Activated naive CD4-positive, alpha-beta T cell treated with anti-CD3 and anti-CD28 coated beads for 36 hours (primary cell): ENCODE measurements at regions of chr11 and their contacts with region 1.

Region 1: DNA sequence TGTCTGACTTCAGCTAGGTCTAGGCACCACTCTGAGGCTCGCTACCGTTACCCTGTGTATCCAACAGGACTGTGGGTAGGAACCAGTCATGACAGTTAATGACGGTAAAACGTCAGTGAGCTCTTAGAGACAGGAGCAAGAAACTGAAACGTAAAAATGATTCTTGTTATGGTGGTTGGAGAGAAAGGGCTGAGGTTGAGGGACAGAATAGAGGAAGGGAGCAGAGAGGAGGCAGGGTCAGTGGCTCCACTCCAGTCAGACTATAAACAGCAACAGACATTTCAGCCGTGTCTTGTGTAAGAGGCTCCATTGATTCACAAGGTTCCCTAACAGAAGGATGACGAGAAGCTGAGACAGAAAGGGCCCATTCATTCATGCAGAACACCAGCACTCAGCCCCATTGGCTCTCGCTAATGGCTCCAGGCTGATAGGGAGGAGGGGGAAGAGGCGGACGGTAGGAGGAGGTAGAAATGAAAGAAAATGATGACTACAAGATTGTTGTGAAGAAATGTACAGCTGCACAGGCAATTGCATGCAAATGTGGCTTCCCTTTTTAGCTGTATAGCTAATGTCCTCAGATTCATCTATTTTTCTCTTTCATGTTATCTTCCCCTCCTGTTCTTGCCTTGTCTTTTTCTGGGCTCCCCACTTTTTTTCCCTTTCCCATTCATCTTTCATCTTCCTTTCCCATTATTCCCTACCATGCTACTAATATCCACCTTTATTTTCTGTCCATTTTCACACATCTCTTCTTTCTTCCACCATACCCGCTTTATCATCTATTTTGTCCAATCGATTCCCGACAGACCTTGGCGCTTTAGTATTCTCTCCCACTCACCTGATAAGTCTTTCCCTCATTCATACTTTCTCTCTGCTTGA is 34.3 kb downstream of the ETS1 start:
- DNase-seq: peak; percentile 68
- H3K4me3 Mint-ChIP-seq: peak overlapping the region; percentile 19
- H3K27ac Mint-ChIP-seq: peak overlapping the region; percentile 95
- H3K4me1 Mint-ChIP-seq: peaks cover 59% of the 10 kb centered on the region
- H3K27me3 Mint-ChIP-seq: no peaks in the 10 kb centered on the region

Region 2: GRCh38 chr11:128039140-128040021 is 513.6 kb before region 1 on chr11:
- CTCF ChIA-PET with region 1: no interaction called
- intact Hi-C with region 1: loop called (anchors 10 kb)
- DNase-seq: peak; percentile 89
- H3K4me3 Mint-ChIP-seq: peak overlapping the region; percentile 40
- H3K27ac Mint-ChIP-seq: peak overlapping the region; percentile 92
- H3K4me1 Mint-ChIP-seq: peaks cover 47% of the 10 kb centered on the region
- H3K27me3 Mint-ChIP-seq: no peaks in the 10 kb centered on the region

Region 3: DNA sequence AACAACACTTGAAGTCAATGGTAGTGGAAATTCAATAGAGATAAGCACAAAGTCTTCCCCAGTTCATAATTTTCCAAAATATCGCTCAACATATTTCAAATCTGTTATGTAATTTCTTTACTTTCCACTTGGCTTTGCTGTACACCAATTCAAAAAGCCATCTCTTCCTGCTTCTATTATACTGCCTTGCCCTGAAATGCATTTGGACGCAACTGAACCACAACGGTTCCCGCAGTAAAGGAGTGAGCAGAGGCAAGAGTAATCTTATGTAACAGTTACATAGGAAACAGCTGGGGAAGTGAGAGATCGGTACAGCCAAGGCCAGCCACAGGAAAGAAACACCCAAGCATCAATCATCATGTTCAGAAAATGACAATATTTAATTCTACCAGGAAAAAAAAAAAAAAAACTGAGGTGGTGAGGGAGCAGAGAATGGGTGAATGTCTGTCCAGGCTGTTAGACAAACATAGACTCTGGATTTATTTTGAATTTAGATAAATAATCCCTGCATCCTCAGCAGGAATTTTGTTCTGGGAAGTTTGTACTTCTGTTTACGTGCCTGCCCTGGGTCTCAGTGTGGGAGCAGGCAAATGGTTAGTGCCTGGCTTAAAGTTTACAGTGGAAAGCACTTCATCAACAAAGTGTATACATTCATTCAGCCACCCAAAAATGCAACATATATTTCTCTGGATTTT is 357.8 kb before region 1 on chr11:
- CTCF ChIA-PET with region 1: no interaction called
- intact Hi-C with region 1: loop called (anchors 1 kb)
- DNase-seq: peak; percentile 77
- H3K4me3 Mint-ChIP-seq: peak overlapping the region; percentile 6
- H3K27ac Mint-ChIP-seq: peak overlapping the region; percentile 32
- H3K4me1 Mint-ChIP-seq: peaks cover 42% of the 10 kb centered on the region
- H3K27me3 Mint-ChIP-seq: no peaks in the 10 kb centered on the region

Region 4: DNA sequence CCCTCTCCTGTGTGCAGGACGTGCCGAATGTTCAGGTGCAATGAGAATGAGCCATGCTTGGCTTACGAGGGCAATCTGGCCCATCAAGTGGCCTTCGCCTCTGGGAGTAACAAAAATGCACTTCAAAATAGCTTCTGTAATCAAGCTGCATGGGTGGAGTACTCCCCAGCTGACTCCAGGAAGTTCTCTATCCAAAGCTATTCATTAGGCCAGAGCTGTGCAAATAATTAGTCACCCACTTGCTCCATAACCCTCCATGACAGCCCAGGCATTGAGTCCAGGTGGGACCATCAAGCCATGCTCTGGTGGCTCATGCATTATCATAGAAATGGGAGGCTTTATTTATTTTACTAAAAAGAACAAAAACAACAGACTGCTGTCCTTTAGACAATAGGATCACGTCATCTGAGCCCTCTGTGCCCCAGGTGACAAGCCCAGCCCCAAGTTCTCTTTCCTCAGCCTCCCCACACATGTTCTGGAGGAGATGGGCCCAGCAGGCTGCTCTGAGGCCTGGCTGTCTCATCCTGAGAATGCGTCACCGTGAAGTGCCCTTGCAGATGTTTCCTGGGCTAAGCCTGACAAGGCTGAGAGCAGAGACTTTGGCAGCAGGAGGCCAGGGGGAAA is 210.4 kb before region 1 on chr11:
- CTCF ChIA-PET with region 1: no interaction called
- intact Hi-C with region 1: loop called (anchors 1 kb)
- DNase-seq: peak; percentile 93
- H3K4me3 Mint-ChIP-seq: peak overlapping the region; percentile 73
- H3K27ac Mint-ChIP-seq: peak overlapping the region; percentile 89
- H3K4me1 Mint-ChIP-seq: peaks cover 93% of the 10 kb centered on the region
- H3K27me3 Mint-ChIP-seq: no peaks in the 10 kb centered on the region

Region 5: DNA sequence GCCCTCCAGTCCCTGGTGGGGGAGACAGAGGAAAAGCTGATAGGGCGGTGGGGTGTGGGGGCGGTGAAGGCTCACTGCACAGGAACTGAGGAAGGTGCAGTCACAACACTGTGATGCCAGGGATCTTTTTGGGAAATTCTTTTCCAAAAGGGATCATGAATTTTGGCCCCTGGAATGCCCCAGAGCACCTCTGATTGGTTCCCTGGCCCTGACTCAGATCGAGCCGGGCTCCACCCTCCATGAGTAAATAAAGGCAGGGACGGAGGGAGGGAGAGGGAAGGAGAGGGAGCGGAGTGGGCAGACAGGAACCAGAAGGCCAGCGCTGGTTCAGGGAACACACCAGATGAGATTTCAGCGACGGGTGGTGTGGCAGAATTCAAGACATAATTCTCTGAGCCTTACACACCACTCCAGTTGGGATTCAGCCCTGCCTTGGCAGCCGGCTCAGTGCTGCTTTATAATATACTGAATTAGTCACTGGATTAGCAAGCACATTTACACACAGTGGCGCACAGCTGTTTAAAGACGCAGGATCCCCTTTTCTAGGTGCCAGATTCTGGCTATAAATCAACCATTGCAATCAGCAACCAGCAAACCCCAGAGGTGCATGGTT is 45.9 kb before region 1 on chr11:
- CTCF ChIA-PET with region 1: interaction called, 4 read pairs
- intact Hi-C with region 1: loop called (anchors 1 kb)
- DNase-seq: peak; percentile 82
- H3K4me3 Mint-ChIP-seq: peak overlapping the region; percentile 77
- H3K27ac Mint-ChIP-seq: peak overlapping the region; percentile 97
- H3K4me1 Mint-ChIP-seq: peaks cover 88% of the 10 kb centered on the region
- H3K27me3 Mint-ChIP-seq: no peaks in the 10 kb centered on the region

Region 6: DNA sequence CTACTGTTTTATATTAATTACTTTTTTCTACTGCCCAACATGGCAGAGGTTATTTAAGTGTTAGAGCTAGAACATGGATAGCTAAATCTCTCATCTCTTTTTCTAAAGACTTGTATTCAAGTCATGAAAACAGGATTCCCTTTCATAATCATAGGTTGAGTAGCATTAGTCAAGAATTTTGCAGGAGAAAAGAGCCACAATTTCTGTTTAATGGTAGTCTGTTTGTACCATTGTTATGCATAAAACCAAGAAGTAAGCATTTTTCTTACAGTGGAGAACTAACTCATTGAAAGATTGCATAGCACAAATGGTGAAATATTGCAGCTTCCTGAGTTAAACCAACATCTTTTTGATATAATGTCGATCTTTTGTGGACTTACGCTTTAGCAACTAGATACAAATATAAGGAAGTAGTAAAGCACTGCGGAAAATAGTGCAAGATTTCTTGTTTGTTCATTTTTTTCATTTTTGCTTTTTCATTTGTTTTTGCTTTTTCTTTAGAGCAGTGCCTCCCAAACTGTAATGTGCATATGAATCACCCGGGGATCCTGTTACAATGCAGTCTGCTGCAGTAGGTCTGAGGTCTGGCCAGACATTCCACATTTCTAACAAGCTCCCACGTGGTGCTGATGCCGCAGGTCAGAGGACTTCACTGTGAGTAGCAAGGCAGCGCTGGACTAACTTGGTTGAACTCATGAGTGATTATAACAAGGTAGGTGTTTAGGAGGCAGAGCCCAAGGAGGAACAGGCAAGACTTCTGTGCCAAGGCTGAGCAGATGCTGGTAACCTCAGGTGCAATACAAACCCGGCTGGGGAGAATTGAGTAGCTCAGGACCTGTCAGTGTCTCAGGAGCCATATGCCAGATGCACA is 29.7 kb after region 1 on chr11:
- CTCF ChIA-PET with region 1: interaction called, 7 read pairs
- intact Hi-C with region 1: loop called (anchors 1 kb)
- DNase-seq: peak; percentile 50
- H3K4me3 Mint-ChIP-seq: peak overlapping the region; percentile 69
- H3K27ac Mint-ChIP-seq: peak overlapping the region; percentile 78
- H3K4me1 Mint-ChIP-seq: peaks cover 62% of the 10 kb centered on the region
- H3K27me3 Mint-ChIP-seq: no peaks in the 10 kb centered on the region

Region 7: DNA sequence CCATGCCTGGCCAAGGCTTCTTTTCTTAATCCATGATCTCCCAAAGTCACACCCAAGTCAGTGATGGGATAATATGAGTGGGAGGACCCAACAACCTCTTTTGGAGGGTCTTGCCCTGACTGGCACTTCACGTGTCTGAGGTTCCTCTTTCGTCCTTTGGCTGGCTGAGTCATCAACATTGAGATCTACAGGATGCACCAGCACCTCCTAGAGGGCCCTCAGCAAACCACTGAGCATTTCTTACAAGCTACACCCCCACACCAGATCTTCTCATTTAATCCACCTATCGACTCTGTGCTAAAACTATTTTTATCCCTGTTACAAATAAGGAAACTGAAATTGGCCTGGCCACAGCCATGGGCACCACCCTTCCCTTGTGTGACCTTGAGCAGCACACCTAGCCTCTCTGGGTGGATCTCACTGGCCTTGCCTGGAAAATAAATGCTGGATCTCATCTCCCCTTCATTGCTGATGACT is 204.3 kb after region 1 on chr11:
- CTCF ChIA-PET with region 1: no interaction called
- intact Hi-C with region 1: loop called (anchors 1 kb)
- DNase-seq: peak; percentile 85
- H3K4me3 Mint-ChIP-seq: peak overlapping the region; percentile 14
- H3K27ac Mint-ChIP-seq: peak overlapping the region; percentile 86
- H3K4me1 Mint-ChIP-seq: peaks cover 74% of the 10 kb centered on the region
- H3K27me3 Mint-ChIP-seq: no peaks in the 10 kb centered on the region